ENCODE measurements at regions of chr12 and their contacts with region 1.

Region 1: DNA sequence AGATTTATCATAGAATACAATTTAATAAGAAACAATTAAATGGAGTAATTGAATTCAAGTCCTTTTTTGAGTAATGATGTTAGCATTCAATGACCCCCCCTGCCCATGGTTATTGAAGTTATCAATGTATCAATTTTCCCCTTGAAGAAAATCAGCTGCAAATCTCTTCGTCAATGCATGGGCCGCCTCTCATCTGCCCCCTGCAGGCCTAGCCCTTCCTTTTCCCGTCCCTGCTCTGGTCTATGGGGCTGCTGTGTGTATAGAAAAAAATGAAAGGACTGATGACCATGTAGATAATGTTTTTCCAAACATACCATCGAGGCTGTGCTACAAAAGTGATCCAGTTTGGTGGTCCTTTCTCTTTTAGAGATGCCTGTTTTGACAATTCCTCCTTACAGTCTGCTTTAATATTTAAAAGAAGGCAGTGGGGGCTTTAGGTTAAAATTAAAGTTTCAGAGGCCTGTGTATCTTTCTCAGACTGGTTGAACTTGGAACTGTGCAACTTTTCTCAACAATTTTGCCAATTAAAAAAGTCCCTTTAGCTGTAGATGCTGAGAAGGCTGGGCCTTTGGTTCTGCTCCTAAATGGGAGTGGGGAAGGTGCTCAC is 98.4 kb downstream of the APAF1 start:
- DNase-seq: peak; percentile 78
- ATAC-seq: peak; percentile 59
- H3K4me3 Mint-ChIP-seq: no peak overlapping the region
- H3K27ac Mint-ChIP-seq: peak overlapping the region; percentile 29
- H3K4me1 Mint-ChIP-seq: peaks cover 62% of the 10 kb centered on the region
- H3K27me3 Mint-ChIP-seq: peaks cover 6% of the 10 kb centered on the region

Region 2: GRCh38 chr12:98698603-98699463 is 44.6 kb before region 1 on chr12:
- CTCF ChIA-PET with region 1: interaction called, 13 read pairs
- DNase-seq: peak; percentile 66
- ATAC-seq: peak; percentile 65
- H3K4me3 Mint-ChIP-seq: no peak overlapping the region
- H3K27ac Mint-ChIP-seq: no peak overlapping the region
- H3K4me1 Mint-ChIP-seq: peaks cover 17% of the 10 kb centered on the region
- H3K27me3 Mint-ChIP-seq: no peaks in the 10 kb centered on the region

Region 3: DNA sequence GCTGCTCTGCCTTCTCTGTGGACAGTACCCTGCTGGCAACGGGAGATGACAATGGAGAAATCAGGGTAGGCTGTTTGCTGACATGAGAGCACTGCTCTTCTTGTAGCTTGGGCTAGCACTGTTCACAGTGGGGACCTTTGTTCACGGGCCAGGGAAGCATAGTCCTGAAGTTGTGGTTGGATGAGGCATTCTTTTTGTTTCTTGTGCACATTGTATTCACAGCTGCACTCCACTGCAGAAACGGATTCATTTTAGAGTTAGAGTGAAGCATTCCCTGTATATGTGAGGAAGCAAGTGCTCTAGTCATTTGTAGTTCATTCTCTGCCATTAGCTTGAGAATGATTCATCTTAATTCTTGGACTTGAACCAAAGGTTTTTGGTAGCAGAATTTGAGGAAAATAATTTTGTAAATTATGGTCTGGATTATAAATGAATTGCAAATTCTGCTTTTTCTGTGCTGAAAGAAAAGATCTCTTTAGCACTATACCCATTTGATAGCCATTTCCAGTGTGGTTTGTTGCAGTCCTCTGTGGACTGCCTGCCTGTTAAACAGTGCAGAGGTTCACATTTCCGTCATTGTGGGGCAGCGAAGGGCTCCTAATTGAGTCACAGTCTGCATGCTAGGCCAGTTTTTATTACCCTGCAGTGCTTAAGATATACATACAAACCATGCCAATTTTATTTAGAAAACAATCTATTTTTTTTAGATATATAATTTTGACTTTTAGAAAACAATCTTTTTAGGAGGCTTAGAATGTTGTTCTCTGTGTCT is 17.8 kb before region 1 on chr12:
- CTCF ChIA-PET with region 1: interaction called, 24 read pairs
- DNase-seq: peak; percentile 76
- ATAC-seq: peak; percentile 68
- H3K4me3 Mint-ChIP-seq: no peak overlapping the region
- H3K27ac Mint-ChIP-seq: peak overlapping the region; percentile 70
- H3K4me1 Mint-ChIP-seq: peaks cover 20% of the 10 kb centered on the region
- H3K27me3 Mint-ChIP-seq: no peaks in the 10 kb centered on the region

Region 4: DNA sequence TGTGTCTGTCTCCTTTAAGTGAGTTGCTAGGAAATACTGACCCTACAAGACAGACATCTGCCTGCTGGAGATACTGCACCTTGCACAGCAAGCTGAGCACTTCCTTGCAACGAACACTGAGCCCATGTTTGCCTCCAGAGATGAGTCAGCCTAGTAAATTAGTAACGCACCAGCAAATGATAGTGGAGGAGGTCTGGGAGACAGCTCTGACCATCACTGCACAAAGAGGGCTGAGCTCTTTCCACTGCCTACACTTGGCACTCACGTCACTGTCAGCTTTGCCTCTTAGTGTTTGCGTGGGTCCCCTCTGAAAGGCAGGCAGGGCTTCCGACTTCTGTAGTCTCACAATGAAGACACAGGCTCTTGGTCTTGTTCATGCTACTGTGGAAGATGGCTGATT is 10.6 kb after region 1 on chr12:
- CTCF ChIA-PET with region 1: interaction called, 40 read pairs
- DNase-seq: peak; percentile 78
- ATAC-seq: peak; percentile 96
- H3K4me3 Mint-ChIP-seq: peak overlapping the region; percentile 0
- H3K27ac Mint-ChIP-seq: peak overlapping the region; percentile 77
- H3K4me1 Mint-ChIP-seq: peaks cover 28% of the 10 kb centered on the region
- H3K27me3 Mint-ChIP-seq: no peaks in the 10 kb centered on the region

Region 5: DNA sequence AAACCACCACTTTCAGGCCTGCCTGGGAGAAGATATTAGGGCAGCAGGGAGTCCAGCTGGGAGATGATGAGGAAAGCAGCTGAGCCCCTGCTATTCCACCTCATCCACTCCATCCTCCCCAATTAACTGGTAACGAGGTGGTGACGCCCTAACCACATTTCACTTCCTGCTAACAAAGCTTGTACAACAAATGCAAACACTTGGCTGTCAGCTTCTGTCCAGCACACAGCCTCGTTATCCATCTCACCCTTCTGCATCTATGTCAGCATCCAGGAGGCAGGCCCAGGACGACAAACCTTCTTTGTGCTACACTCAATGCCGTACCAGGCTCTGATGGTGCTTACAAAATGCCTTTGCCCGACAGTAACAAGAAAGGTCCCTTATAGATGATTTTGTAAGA is 127.1 kb after region 1 on chr12:
- CTCF ChIA-PET with region 1: no interaction called
- DNase-seq: no peak
- ATAC-seq: no peak
- H3K4me3 Mint-ChIP-seq: no peak overlapping the region
- H3K27ac Mint-ChIP-seq: no peak overlapping the region
- H3K4me1 Mint-ChIP-seq: peaks cover 9% of the 10 kb centered on the region
- H3K27me3 Mint-ChIP-seq: peaks cover 10% of the 10 kb centered on the region

Measured in activated CD8-positive, alpha-beta memory T cell treated with anti-CD3 and anti-CD28 coated beads, Interleukin-2, amount 10 ng/mL, durations not matched to agents 7 days and 5 days (primary cell).